IMR-90 (cell line): ENCODE measurements at regions of chr11 and their contacts with region 1.

Region 1: GRCh38 chr11:120295084-120295483 is 30.0 kb upstream of the TLCD5 start:
- DNase-seq: no peak
- ATAC-seq: no peak
- H3K4me3 ChIP-seq: no peak overlapping the region
- H3K27ac ChIP-seq: no peak overlapping the region
- H3K4me1 ChIP-seq: no peaks in the 10 kb centered on the region
- H3K27me3 ChIP-seq: peaks cover 68% of the 10 kb centered on the region
- CTCF ChIP-seq: no peak
- POLR2A ChIP-seq: no peak
- RAD21 ChIP-seq: no peak

Region 2: DNA sequence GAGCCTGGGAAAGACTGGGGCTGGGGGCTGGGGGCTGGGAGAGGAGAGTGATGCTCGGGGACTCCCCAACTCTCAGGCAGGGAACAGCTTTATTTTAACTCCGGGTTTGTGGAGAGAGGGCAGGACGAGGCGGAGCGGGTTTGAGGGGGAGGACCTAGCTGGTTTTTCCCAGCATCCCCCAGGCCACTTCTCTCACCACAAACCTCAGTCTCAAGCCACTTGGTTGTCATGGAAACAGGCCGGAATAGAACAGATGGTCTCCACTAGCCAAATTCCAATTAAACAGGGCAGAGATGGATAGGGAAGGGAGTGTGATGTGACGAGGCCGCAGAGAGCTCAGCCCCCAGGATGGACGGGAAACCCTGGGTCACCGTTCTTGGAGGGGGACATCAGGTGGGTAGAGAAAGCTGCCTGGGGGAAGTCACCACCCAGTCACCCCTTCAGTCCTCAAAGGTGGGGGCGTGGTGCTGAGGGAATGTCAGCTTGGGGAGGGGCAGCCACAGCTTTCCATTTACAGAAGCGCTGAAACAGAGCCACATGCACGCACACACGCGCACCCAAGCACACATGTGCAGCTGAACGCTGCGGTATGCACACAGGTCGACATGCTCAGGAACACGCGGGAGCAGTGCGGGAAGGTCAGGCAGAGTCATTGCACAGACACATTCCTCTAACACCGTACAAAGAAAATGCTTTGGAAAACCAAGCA is 585.3 kb before region 1 on chr11:
- CTCF ChIA-PET with region 1: no interaction called
- POLR2A ChIA-PET with region 1: no interaction called
- dilution Hi-C with region 1: no loop called
- in situ Hi-C with region 1: no loop called
- intact Hi-C with region 1: no loop called
- DNase-seq: peak; percentile 69
- ATAC-seq: peak; percentile 86
- H3K4me3 ChIP-seq: no peak overlapping the region
- H3K27ac ChIP-seq: no peak overlapping the region
- H3K4me1 ChIP-seq: no peaks in the 10 kb centered on the region
- H3K27me3 ChIP-seq: peaks cover 2% of the 10 kb centered on the region; the same call in 1 of the 2 replicates
- CTCF ChIP-seq: no peak
- POLR2A ChIP-seq: no peak
- RAD21 ChIP-seq: no peak

Region 3: DNA sequence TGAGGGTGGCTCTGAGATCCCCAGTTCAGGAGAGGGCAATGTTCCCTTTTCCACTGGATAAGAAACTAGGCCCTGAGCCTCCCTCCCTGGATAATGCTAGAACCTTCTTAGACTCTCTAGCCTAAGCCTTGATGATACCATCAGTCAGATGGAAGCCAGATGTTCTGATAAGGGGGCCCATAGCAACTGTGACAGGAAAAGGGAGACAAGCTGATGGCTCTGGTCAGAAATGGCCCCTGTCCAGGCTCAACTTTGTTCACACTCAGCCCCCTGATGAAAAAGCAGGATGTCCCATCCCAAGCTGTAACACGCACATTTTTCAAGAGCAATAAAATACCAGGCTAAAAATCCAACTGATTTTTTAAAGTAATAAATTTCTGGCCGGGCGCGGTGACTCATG is 91.5 kb before region 1 on chr11:
- CTCF ChIA-PET with region 1: no interaction called
- POLR2A ChIA-PET with region 1: no interaction called
- dilution Hi-C with region 1: no loop called
- in situ Hi-C with region 1: no loop called
- intact Hi-C with region 1: no loop called
- DNase-seq: no peak
- ATAC-seq: no peak
- H3K4me3 ChIP-seq: no peak overlapping the region
- H3K27ac ChIP-seq: no peak overlapping the region
- H3K4me1 ChIP-seq: peaks cover 4% of the 10 kb centered on the region
- H3K27me3 ChIP-seq: peaks cover 15% of the 10 kb centered on the region
- CTCF ChIP-seq: no peak
- POLR2A ChIP-seq: no peak
- RAD21 ChIP-seq: no peak

Region 4: DNA sequence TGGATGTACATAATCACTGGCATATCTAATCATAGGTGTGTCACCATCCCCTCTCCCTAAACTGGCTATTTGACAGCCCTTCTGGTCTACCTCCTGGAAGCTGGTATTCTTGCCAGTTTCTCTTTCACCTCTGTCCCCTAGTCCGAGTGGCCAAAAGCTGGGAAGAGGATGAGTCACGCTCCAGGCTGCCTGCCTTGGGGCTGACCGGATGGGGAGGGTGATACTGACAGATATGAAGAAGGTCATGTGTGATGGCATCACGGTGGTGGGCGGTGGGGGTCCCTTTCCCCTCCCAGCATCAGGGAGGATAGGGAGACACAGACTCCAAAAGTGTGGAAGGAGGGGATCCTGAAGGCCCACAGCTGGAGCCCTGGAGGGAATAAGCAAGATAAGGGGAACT is 79.5 kb before region 1 on chr11:
- CTCF ChIA-PET with region 1: no interaction called
- POLR2A ChIA-PET with region 1: no interaction called
- dilution Hi-C with region 1: no loop called
- in situ Hi-C with region 1: no loop called
- intact Hi-C with region 1: no loop called
- DNase-seq: peak; percentile 74
- ATAC-seq: peak; percentile 36
- H3K4me3 ChIP-seq: no peak overlapping the region
- H3K27ac ChIP-seq: no peak overlapping the region
- H3K4me1 ChIP-seq: peaks cover 30% of the 10 kb centered on the region
- H3K27me3 ChIP-seq: no peaks in the 10 kb centered on the region
- CTCF ChIP-seq: no peak
- POLR2A ChIP-seq: no peak
- RAD21 ChIP-seq: no peak

Region 5: DNA sequence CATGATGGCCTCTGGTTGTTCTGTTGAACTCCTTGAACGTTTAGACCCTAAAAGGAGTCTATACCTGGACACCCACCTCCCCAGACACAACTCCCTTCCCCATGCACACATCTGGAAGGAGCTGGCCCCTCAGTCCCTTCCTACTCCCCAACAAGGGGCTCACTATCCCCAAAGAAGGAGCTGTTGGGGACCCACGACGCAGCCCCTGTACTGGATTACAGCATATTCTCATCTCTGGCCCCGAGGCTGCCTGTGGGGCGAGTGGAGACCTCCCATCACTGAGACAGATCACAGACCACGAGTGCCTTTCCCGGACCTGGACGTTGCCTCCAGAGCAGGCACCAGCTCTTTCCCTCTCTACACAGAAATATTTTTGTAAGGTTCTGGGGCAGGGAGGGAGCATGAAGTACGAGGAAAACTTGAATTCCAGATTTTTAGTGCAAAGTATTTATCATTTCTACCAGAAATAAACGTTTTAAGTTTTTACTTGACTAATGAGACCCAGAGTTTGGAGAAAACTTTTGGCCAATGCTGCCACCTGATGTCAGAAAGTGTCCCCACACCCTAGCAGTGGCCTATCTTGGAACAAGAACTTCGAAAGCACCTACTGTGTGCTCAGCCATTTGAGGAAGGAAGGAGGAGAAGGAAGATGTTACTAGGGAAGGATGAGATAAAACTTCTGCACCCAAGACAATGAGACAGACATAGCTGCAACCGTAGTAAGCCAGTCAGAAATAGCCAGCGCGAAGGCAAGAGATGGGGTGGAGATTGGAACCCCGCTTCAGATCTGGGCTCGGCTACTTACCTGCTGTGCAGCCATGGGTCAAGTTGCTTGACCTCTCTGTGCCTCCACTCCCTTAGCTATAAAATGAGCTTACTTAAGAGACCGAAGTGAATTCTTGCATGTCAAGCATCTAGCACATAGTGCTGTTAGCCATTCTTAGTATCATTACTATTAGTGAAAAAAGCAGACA is 65.3 kb before region 1 on chr11:
- CTCF ChIA-PET with region 1: no interaction called
- POLR2A ChIA-PET with region 1: no interaction called
- dilution Hi-C with region 1: no loop called
- in situ Hi-C with region 1: loop called (anchors 5 kb)
- intact Hi-C with region 1: no loop called
- DNase-seq: peak; percentile 29
- ATAC-seq: peak; percentile 68; the same call in 1 of the 2 replicates
- H3K4me3 ChIP-seq: no peak overlapping the region
- H3K27ac ChIP-seq: no peak overlapping the region
- H3K4me1 ChIP-seq: no peaks in the 10 kb centered on the region
- H3K27me3 ChIP-seq: peaks cover 15% of the 10 kb centered on the region
- CTCF ChIP-seq: peak; percentile 59
- POLR2A ChIP-seq: no peak
- RAD21 ChIP-seq: peak; percentile 73